ENCODE measurements at regions of chr13 and their contacts with region 1.

Region 1: DNA sequence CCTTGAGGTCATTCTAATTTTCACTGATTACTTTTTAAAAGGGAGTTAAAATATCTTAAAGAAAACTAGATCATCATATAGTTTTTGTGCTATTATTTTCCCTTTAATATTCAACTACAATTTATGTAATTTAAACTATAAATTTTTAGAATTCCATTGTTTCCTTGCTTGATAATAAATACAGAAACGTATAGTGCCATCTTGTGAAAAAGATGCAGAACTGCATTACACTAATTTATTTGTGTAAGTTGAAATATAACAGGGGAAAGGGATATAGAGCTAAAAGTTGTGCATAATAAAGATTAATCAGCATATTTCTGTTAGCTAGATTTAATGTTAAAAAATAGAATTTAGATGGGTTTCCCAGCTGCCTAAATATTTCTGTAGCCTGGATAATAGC is 61.5 kb upstream of the TDRD3 start:
- DNase-seq: peak; percentile 22
- ATAC-seq: peak; percentile 67
- H3K4me3 ChIP-seq: no peak overlapping the region
- H3K27ac ChIP-seq: no peak overlapping the region
- H3K4me1 ChIP-seq: no peaks in the 10 kb centered on the region
- H3K27me3 ChIP-seq: peaks cover 2% of the 10 kb centered on the region
- CTCF ChIP-seq: peak; percentile 69
- POLR2A ChIP-seq: no peak
- RAD21 ChIP-seq: peak; percentile 59

Region 2: DNA sequence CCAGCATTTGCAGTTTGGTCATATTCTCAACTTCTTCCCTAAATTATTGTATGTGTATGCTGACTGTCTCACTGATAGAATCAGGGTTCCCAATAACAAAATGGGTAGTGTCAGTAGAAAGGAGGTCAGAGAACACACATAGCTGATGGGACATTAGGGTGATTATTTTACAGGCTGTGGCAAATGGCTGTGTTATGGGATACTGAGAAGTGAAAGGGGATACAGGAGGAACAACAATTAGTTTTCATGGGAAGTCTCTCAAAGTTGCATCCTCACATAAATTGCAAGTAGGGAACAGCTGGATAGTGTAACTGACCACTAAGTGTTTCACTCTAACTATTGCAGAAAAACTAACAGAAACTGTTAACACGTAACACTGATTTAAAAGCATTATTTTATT is 1504.7 kb before region 1 on chr13:
- CTCF ChIA-PET with region 1: no interaction called
- POLR2A ChIA-PET with region 1: interaction called, 12 read pairs
- dilution Hi-C with region 1: no loop called
- in situ Hi-C with region 1: no loop called
- intact Hi-C with region 1: no loop called
- DNase-seq: no peak
- ATAC-seq: no peak
- H3K4me3 ChIP-seq: no peak overlapping the region
- H3K27ac ChIP-seq: no peak overlapping the region
- H3K4me1 ChIP-seq: no peaks in the 10 kb centered on the region
- H3K27me3 ChIP-seq: no peaks in the 10 kb centered on the region
- CTCF ChIP-seq: no peak
- POLR2A ChIP-seq: no peak
- RAD21 ChIP-seq: no peak

Region 3: GRCh38 chr13:59533561-59534555 is 801.7 kb before region 1 on chr13:
- CTCF ChIA-PET with region 1: no interaction called
- POLR2A ChIA-PET with region 1: no interaction called
- dilution Hi-C with region 1: no loop called
- in situ Hi-C with region 1: no loop called
- intact Hi-C with region 1: no loop called
- DNase-seq: peak; percentile 34
- ATAC-seq: no peak
- H3K4me3 ChIP-seq: no peak overlapping the region
- H3K27ac ChIP-seq: no peak overlapping the region
- H3K4me1 ChIP-seq: peaks cover 3% of the 10 kb centered on the region
- H3K27me3 ChIP-seq: no peaks in the 10 kb centered on the region; the same call in 1 of the 2 replicates
- CTCF ChIP-seq: no peak
- POLR2A ChIP-seq: no peak
- RAD21 ChIP-seq: no peak